ENCODE measurements at regions of chr1 and their contacts with region 1.

Region 1: GRCh38 chr1:172443626-172444453 is at the start of gene PIGC:
- DNase-seq: peak; percentile 80
- ATAC-seq: peak; percentile 99
- H3K4me3 Mint-ChIP-seq: peak within 1 kb of the TSS; percentile 90
- H3K27ac Mint-ChIP-seq: peak within 1 kb of the TSS; percentile 84
- H3K4me1 Mint-ChIP-seq: peaks cover 36% of the 10 kb centered on the region
- H3K27me3 Mint-ChIP-seq: no peaks in the 10 kb centered on the region
- CTCF ChIP-seq: no peak
- total RNA-seq, gene PIGC: 24.2 TPM in 2 replicates

Region 2: GRCh38 chr1:171781176-171781875 is 662.5 kb before region 1 on chr1 and contains the start of gene METTL13:
- CTCF ChIA-PET with region 1: no interaction called
- POLR2A ChIA-PET with region 1: no interaction called
- intact Hi-C with region 1: loop called (anchors 1 kb)
- DNase-seq: peak; percentile 91
- ATAC-seq: peak; percentile 94
- H3K4me3 Mint-ChIP-seq: peak within 1 kb of the TSS; percentile 99
- H3K27ac Mint-ChIP-seq: peak within 1 kb of the TSS; percentile 94
- H3K4me1 Mint-ChIP-seq: peaks cover 43% of the 10 kb centered on the region
- H3K27me3 Mint-ChIP-seq: peaks cover 6% of the 10 kb centered on the region
- CTCF ChIP-seq: no peak
- total RNA-seq, gene METTL13: 33.6 and 35.7 TPM in 2 replicates

Region 3: DNA sequence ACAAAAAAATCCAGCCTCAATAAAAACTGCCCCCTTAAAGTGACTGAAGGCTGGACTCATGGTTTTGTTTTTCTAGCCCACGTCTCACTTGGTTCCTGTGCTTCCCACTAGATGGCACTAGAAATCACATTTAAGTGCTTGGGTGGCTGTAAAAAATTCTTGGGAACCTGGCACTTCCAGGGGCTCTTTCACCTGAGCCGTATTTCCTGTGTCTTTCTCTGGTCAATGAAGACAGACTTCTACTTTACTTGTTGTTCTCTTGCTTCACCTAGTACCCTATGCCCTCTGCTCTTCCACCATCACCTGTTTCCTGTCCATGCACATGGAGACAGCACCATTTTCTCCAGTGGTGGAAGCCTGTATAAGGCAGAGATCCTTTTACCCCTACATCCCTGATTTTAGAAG is 642.4 kb before region 1 on chr1:
- CTCF ChIA-PET with region 1: no interaction called
- POLR2A ChIA-PET with region 1: no interaction called
- intact Hi-C with region 1: loop called (anchors 1 kb)
- DNase-seq: no peak
- ATAC-seq: no peak
- H3K4me3 Mint-ChIP-seq: no peak overlapping the region
- H3K27ac Mint-ChIP-seq: no peak overlapping the region
- H3K4me1 Mint-ChIP-seq: peaks cover 15% of the 10 kb centered on the region
- H3K27me3 Mint-ChIP-seq: no peaks in the 10 kb centered on the region
- CTCF ChIP-seq: no peak

Region 4: GRCh38 chr1:171984850-171985485 is 458.9 kb before region 1 on chr1:
- CTCF ChIA-PET with region 1: interaction called, 4 read pairs
- POLR2A ChIA-PET with region 1: no interaction called
- intact Hi-C with region 1: loop called (anchors 1 kb)
- DNase-seq: no peak
- ATAC-seq: no peak
- H3K4me3 Mint-ChIP-seq: no peak overlapping the region
- H3K27ac Mint-ChIP-seq: no peak overlapping the region
- H3K4me1 Mint-ChIP-seq: no peaks in the 10 kb centered on the region
- H3K27me3 Mint-ChIP-seq: no peaks in the 10 kb centered on the region
- CTCF ChIP-seq: peak; percentile 59

Region 5: GRCh38 chr1:172002725-172003345 is 441.0 kb before region 1 on chr1:
- CTCF ChIA-PET with region 1: interaction called, 49 read pairs
- POLR2A ChIA-PET with region 1: no interaction called
- intact Hi-C with region 1: loop called (anchors 1 kb)
- DNase-seq: no peak
- ATAC-seq: no peak
- H3K4me3 Mint-ChIP-seq: no peak overlapping the region
- H3K27ac Mint-ChIP-seq: no peak overlapping the region
- H3K4me1 Mint-ChIP-seq: no peaks in the 10 kb centered on the region
- H3K27me3 Mint-ChIP-seq: no peaks in the 10 kb centered on the region
- CTCF ChIP-seq: peak; percentile 32

Region 6: DNA sequence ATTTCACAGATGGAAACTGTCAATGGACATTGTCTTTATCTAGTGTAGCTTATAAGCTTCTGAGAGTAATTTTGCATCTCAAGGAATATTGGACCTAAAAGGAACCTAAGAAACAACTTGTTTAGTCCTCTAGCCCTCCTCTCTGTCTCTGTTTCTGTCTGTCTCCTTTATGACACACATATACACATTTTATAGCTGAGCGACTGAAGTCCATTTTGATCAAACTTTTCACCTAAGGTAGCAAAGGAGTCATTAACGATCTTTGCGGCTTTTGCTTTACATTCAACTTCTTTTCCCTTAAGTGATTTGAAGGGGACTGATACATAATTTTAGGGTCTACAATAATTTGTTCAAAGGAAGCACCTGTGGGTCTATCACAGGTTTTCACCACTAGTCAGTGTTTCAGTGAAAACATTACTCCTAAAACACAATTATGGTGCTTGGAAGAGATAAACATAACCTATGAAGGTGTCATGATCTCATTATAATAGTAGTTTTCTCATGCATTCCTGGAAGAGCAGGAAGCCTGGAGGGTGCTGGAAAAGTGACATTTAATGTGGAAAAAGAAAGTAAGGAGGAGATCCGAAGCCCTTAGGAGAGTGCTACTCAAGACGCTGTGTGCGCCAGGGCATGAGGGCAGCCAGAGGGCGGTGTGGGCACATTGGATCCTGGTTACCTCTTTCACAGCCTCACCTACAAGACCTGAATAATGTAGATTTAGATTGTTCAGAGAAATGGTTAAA is 353.9 kb before region 1 on chr1:
- CTCF ChIA-PET with region 1: interaction called, 6 read pairs
- POLR2A ChIA-PET with region 1: no interaction called
- intact Hi-C with region 1: loop called (anchors 1 kb)
- DNase-seq: peak; percentile 41
- ATAC-seq: peak; percentile 90
- H3K4me3 Mint-ChIP-seq: peak overlapping the region; percentile 36
- H3K27ac Mint-ChIP-seq: peak overlapping the region; percentile 8
- H3K4me1 Mint-ChIP-seq: peaks cover 8% of the 10 kb centered on the region
- H3K27me3 Mint-ChIP-seq: no peaks in the 10 kb centered on the region
- CTCF ChIP-seq: no peak

Region 7: DNA sequence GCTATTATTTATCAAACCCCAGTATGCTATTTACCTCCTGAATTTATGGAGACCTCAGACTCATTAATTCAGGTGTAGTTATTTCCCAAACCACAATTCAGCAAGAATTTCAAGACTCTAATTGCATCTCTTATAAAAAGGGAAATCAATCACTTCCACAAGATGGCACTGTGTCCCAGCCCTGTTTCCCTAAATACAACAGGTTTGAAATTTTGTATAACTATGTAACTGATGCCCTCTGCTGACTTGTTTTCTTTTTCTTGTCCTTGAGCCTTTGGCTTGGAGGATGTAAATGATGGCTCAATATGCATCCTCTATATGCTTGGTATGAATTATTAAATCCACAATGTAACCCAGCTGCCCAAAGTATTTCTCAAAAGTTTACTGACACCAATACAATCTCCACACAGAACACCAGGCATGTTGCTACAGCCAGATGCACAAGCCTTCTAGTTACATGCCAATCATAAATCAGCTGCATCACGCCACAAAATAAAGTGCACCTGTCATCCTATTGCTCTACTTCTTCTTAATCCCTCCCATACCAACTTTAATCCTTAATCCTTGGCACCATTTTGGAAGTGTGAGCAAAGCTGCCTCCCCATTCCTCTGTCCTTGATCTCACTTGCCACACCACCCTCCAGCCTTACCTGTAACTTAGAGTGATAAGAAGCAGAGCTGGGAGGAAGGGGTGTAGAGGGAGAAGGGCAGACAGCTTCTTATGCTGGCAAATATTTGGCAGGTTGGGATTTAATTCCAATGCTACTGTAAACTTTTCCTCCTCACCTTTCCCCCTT is 14.3 kb before region 1 on chr1:
- CTCF ChIA-PET with region 1: interaction called, 14 read pairs
- POLR2A ChIA-PET with region 1: no interaction called
- intact Hi-C with region 1: loop called (anchors 1 kb)
- DNase-seq: no peak
- ATAC-seq: peak; percentile 67
- H3K4me3 Mint-ChIP-seq: no peak overlapping the region
- H3K27ac Mint-ChIP-seq: no peak overlapping the region
- H3K4me1 Mint-ChIP-seq: peaks cover 13% of the 10 kb centered on the region
- H3K27me3 Mint-ChIP-seq: no peaks in the 10 kb centered on the region
- CTCF ChIP-seq: no peak